ENCODE measurements at regions of chr16 and their contacts with region 1.

Region 1: DNA sequence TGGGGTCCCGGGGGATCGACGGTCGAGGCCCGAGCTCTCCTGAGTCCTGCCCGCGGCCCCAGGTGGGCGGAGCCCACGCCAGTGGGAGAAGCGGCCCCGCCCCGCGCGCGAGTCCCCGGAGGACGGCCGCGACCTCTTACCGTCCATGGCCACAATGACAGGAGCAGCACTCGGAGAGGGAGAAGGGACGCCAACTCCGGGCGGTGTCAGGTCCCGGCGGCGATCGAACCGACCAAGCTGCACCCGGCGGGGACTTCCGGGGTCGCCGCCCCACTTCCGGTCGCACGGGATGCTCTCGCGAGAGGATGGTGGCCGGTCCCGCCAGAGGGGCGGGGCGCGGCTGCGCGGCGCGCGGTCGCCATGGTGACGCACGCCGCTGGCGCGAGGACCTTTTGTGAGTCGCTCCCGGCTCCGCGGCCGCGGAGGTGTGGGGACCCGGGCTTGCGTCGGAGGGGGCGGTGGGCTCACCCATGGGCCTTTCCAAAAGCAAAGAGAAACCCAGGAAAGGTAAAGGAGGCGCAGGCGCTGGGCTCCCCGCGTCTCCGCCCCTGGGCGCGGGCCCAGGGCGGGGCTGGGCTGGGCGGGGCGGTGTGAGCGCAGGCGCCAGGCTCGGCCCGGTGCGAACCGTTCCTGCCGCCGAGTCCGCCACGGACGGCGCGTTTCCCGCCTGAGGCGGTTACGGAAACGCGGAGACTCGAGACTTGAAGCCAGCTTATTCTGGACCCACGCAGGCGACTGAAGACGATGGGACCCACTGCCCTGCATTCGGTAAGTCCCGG is at the starts of genes CHMP1A and SPATA33:
- DNase-seq: peak; percentile 84
- H3K4me3 Mint-ChIP-seq: peak within 1 kb of the TSS; percentile 89
- H3K27ac Mint-ChIP-seq: peak within 1 kb of the TSS; percentile 85
- H3K4me1 Mint-ChIP-seq: peaks cover 7% of the 10 kb centered on the region
- H3K27me3 Mint-ChIP-seq: no peaks in the 10 kb centered on the region
- CTCF ChIP-seq: no peak
- total RNA-seq, gene CHMP1A: 59.7 and 62.4 TPM in 2 replicates
- total RNA-seq, gene SPATA33: 7.2 and 9.5 TPM in 2 replicates

Region 2: GRCh38 chr16:89560378-89561141 is 97.1 kb before region 1 on chr16 and contains the start of gene RPL13:
- CTCF ChIA-PET with region 1: no interaction called
- POLR2A ChIA-PET with region 1: interaction called, 10 read pairs
- intact Hi-C with region 1: no loop called
- DNase-seq: peak; percentile 96
- H3K4me3 Mint-ChIP-seq: peak within 1 kb of the TSS; percentile 91
- H3K27ac Mint-ChIP-seq: peak within 1 kb of the TSS; percentile 99
- H3K4me1 Mint-ChIP-seq: peaks cover 24% of the 10 kb centered on the region
- H3K27me3 Mint-ChIP-seq: no peaks in the 10 kb centered on the region
- CTCF ChIP-seq: no peak
- total RNA-seq, gene RPL13: 3,133 and 3,148 TPM in 2 replicates

Region 3: GRCh38 chr16:89670496-89671431 is 13.1 kb after region 1 on chr16:
- CTCF ChIA-PET with region 1: interaction called, 3 read pairs
- POLR2A ChIA-PET with region 1: interaction called, 21 read pairs
- intact Hi-C with region 1: no loop called
- DNase-seq: peak; percentile 51
- H3K4me3 Mint-ChIP-seq: no peak overlapping the region
- H3K27ac Mint-ChIP-seq: peak overlapping the region; percentile 12
- H3K4me1 Mint-ChIP-seq: no peaks in the 10 kb centered on the region
- H3K27me3 Mint-ChIP-seq: no peaks in the 10 kb centered on the region
- CTCF ChIP-seq: no peak

Region 4: GRCh38 chr16:89686520-89687091 is 29.0 kb after region 1 on chr16 and contains the start of gene CDK10:
- CTCF ChIA-PET with region 1: interaction called, 5 read pairs
- POLR2A ChIA-PET with region 1: interaction called, 17 read pairs
- intact Hi-C with region 1: no loop called
- DNase-seq: peak; percentile 85
- H3K4me3 Mint-ChIP-seq: peak within 1 kb of the TSS; percentile 88
- H3K27ac Mint-ChIP-seq: peak within 1 kb of the TSS; percentile 91
- H3K4me1 Mint-ChIP-seq: peaks cover 6% of the 10 kb centered on the region
- H3K27me3 Mint-ChIP-seq: no peaks in the 10 kb centered on the region
- CTCF ChIP-seq: no peak
- total RNA-seq, gene CDK10: 73.0 and 83.4 TPM in 2 replicates

Region 5: DNA sequence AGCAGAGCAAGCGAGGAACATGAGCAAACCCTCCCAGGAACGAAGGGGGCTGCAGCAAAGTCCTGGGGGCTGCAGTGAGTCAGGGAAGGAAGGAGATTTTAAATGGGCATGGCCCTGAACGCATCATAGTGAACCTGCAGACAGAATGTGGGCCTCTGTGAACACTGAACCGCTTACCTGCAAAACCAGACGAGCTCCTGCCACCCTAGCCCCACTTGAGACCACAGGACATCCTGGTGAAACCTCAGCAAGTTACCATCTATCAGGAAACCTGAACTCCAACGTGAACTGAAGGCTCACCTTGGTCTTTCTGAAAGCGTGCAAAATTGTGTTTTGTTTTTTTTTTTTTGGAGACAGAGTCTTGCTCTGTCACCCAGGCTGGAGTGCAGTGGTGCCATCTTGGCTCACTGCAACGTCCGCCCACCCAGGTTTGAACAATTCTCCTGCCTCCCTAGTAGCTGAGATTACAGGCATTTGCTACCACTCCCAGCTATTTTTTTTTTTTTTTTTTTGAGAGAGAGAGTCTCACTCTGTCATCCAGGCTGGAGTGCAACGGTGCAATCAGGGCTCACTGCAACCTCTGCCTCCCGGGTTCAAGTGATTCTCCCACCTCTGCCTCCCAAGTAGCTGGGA is 128.0 kb after region 1 on chr16:
- CTCF ChIA-PET with region 1: no interaction called
- POLR2A ChIA-PET with region 1: no interaction called
- intact Hi-C with region 1: no loop called
- DNase-seq: no peak
- H3K4me3 Mint-ChIP-seq: no peak overlapping the region
- H3K27ac Mint-ChIP-seq: no peak overlapping the region
- H3K4me1 Mint-ChIP-seq: no peaks in the 10 kb centered on the region
- H3K27me3 Mint-ChIP-seq: no peaks in the 10 kb centered on the region
- CTCF ChIP-seq: no peak